Dorsolateral prefrontal cortex (tissue), 120 donors: ENCODE measurements at regions of chr19 and their contacts with region 1.

Region 1: GRCh38 chr19:48271531-48272151 is 1.8 kb downstream of the ZNF114 start:
- DNase-seq: peak in 3 of 10 donors; percentile 15 to 38 (median 16)
- H3K4me3 ChIP-seq: peak overlapping the region; percentile 33 to 76 (median 59)
- H3K27ac ChIP-seq: peak overlapping the region in 20 of 59 donors; percentile 6 to 67 (median 41)
- H3K27me3 ChIP-seq: peaks cover 0 to 6% (median 0%) of the 10 kb centered on the region in 45 donors
- CTCF ChIP-seq: peak in 1 of 56 donors; percentile 27

Region 2: GRCh38 chr19:48290771-48291488 is 19.3 kb after region 1 on chr19:
- intact Hi-C with region 1: loop called (anchors 1 kb)
- DNase-seq: peak; percentile 62 to 84 (median 72)
- H3K4me3 ChIP-seq: peak overlapping the region; percentile 29 to 67 (median 53)
- H3K27ac ChIP-seq: peak overlapping the region in 5 of 59 donors; percentile 10 to 56 (median 18)
- H3K27me3 ChIP-seq: peaks cover 0 to 2% (median 0%) of the 10 kb centered on the region in 45 donors
- CTCF ChIP-seq: peak; percentile 90 to 99 (median 97)

Region 3: DNA sequence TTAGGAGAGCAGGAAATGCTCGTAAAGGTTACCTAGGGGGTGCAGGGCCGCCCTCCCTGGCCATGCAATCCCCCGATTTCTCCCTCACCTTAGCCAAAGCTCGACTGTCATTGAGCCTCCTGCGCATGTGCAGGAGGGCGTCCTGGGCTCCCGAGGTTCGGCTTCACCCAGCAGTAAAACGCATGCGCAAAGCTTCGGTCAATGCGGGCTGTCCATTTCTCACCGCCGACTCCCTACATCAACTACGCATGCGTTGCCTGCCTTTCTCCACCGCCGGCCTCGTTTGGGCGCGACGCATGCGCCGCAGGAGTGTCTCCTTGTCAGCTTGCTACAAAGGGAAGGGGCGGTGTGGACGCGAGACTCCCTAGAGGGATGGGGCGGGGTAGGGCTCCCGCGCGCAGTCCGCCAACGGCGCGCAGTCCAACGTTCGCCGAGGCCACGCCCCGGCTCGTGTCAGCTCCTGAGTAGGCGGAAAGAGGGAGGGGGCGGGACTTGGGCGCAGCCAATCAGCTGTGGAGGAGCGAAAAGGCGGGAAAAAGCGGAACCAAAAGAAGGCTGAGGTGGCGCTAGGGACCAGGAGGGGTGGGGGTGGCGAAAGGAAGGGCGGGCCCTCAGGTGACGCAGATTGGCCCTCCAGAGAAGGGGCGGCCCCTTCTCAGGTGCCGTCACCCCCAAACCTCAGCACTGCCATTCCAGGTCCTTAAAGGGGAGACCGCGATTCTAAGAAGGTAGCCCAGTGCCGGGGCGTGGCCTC is 92.3 kb after region 1 on chr19 and contains the starts of genes SYNGR4 and TMEM143:
- intact Hi-C with region 1: no loop called
- DNase-seq: peak; percentile 96 to 99 (median 98)
- H3K4me3 ChIP-seq: peak within 1 kb of the TSS; percentile 49 to 95 (median 79)
- H3K27ac ChIP-seq: peak within 1 kb of the TSS; percentile 83 to 100 (median 99)
- H3K27me3 ChIP-seq: no peaks in the 10 kb centered on the region
- CTCF ChIP-seq: peak in 21 of 56 donors; percentile 5 to 49 (median 19)
- total RNA-seq, gene SYNGR4: 0.50 to 3.0 (median 0.83) TPM in 13 of 120 experiments, not detected in the others
- total RNA-seq, gene TMEM143: 9.2 to 32.0 (median 16.5) TPM